CD8-positive, alpha-beta memory T cell (primary cell): ENCODE measurements at regions of chr5 and their contacts with region 1.

Region 1: DNA sequence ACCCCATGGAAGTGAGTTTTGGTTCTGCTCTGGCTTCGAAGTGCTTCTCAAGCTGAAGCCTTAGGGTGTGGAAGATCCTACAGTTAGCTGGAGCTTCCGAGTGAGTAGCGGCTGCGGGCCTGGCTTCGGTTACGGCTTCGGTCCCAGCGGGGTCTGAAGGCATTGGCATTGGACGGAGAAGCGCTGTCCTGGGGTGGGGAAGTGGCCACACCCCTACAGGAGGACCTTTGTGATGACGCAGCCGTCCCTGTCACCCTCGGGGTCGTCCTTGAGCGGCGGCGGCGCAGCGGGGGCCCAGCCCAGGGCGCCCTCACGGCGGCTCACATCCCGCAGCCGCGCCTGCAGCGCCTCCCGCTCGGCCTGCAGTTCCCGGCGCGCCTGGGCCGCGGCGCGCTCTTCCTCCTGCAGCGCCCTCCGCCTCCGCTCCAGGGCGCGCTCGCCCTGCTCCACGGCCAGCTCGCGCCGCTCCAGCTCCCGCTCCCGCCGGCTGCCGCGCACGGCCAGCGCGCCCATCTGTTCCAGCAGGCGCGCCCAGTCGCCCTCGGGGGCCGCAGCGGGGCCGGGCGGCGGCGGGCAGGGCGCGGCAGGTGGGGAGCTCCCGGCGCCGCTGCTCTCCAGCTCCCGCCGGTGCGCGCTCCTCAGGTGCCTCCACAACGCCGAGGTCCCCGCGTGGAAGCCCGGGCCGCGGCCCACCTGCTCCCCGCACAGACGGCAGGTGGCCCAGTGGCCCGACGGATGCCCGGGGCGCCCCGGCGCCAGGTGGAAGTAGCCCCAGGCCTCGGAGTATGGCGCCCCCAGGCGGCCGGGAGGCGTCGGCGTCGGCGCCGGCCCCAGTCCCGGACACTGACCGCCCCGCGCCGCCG is 9.9 kb downstream of the ZBED3 start:
- DNase-seq: peak; percentile 8 to 57 (median 31)
- H3K4me3 ChIP-seq: no peak overlapping the region
- H3K4me3 Mint-ChIP-seq: peak overlapping the region in 6 of 7 donors; percentile 44 to 86 (median 66)
- H3K27ac ChIP-seq: no peak overlapping the region
- H3K27ac Mint-ChIP-seq: no peak overlapping the region
- H3K4me1 ChIP-seq: peaks cover 5% of the 10 kb centered on the region
- H3K4me1 Mint-ChIP-seq: peaks cover 10 to 16% (median 10%) of the 10 kb centered on the region in 3 donors
- H3K27me3 ChIP-seq: no peaks in the 10 kb centered on the region
- H3K27me3 Mint-ChIP-seq: peaks cover 0 to 4% of the 10 kb centered on the region in 2 donors

Region 2: DNA sequence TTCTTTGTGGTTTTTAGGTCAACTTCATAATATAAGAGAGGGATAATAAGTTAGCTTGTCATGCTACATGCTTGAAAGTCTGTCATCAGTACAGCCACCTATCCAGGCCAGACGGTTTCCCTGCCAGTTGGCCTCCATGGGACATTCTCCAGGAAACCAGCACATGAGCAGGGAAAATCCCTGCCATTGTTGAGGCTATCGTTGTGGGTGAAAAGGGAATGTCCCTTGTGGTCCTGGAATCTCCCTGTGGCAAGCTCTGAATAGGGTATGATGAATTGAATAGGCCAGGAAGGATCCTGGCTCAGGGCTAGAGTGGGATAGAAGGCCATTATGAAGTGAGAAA is 246.1 kb before region 1 on chr5:
- CTCF ChIA-PET with region 1: no interaction called
- POLR2A ChIA-PET with region 1: no interaction called
- DNase-seq: no peak
- H3K4me3 ChIP-seq: no peak overlapping the region
- H3K4me3 Mint-ChIP-seq: no peak overlapping the region
- H3K27ac ChIP-seq: no peak overlapping the region
- H3K27ac Mint-ChIP-seq: no peak overlapping the region
- H3K4me1 ChIP-seq: no peaks in the 10 kb centered on the region
- H3K4me1 Mint-ChIP-seq: no peaks in the 10 kb centered on the region
- H3K27me3 ChIP-seq: no peaks in the 10 kb centered on the region
- H3K27me3 Mint-ChIP-seq: peaks cover 1 to 7% of the 10 kb centered on the region in 2 donors

Region 3: DNA sequence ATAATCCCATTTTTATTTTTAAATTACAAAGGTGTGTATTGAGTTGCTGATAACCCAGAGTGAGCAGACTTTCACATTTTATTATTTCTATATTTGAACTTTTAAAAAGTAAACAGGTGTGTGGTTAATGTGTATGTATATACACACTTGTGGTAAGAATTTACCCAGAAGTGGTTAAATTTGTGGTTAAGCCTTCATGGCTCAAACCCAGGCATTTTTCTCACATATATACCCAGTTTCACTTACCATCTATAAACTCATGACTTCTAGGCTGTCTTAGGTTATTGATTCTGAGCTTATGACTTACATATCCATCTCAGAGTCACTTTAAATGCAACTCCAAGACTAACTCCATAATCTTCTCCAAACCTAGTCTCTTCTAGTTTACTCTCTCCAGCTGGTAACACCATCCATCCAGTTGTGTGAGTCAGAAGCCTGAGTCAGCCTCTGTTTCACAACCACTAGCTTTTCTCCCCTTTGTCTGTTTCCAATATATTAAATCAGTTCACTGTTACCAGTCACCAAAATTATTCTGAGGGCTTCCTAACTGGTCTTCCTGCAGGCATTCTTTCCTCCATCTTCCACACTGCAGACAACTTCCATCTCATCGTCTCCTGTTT is 10.3 kb before region 1 on chr5:
- CTCF ChIA-PET with region 1: interaction called, 13 read pairs
- POLR2A ChIA-PET with region 1: no interaction called
- DNase-seq: no peak
- H3K4me3 ChIP-seq: no peak overlapping the region
- H3K4me3 Mint-ChIP-seq: no peak overlapping the region
- H3K27ac ChIP-seq: no peak overlapping the region
- H3K27ac Mint-ChIP-seq: peak overlapping the region in 2 of 8 donors; percentile 0 to 27
- H3K4me1 ChIP-seq: no peaks in the 10 kb centered on the region
- H3K4me1 Mint-ChIP-seq: peaks cover 14 to 20% (median 17%) of the 10 kb centered on the region in 3 donors
- H3K27me3 ChIP-seq: no peaks in the 10 kb centered on the region
- H3K27me3 Mint-ChIP-seq: no peaks in the 10 kb centered on the region